PC-9 (cell line): ENCODE measurements at regions of chr2 and their contacts with region 1.

Region 1: GRCh38 chr2:69914170-69914960 is 544 bp upstream of the MXD1 start:
- DNase-seq: peak; percentile 99 to 100
- H3K4me3 ChIP-seq: peak overlapping the region; percentile 75
- H3K27ac ChIP-seq: peak overlapping the region; percentile 80
- H3K4me1 ChIP-seq: peaks cover 45% of the 10 kb centered on the region
- H3K27me3 ChIP-seq: no peaks in the 10 kb centered on the region
- CTCF ChIP-seq: peak; percentile 19; the same call in 1 of the 2 replicates

Region 2: DNA sequence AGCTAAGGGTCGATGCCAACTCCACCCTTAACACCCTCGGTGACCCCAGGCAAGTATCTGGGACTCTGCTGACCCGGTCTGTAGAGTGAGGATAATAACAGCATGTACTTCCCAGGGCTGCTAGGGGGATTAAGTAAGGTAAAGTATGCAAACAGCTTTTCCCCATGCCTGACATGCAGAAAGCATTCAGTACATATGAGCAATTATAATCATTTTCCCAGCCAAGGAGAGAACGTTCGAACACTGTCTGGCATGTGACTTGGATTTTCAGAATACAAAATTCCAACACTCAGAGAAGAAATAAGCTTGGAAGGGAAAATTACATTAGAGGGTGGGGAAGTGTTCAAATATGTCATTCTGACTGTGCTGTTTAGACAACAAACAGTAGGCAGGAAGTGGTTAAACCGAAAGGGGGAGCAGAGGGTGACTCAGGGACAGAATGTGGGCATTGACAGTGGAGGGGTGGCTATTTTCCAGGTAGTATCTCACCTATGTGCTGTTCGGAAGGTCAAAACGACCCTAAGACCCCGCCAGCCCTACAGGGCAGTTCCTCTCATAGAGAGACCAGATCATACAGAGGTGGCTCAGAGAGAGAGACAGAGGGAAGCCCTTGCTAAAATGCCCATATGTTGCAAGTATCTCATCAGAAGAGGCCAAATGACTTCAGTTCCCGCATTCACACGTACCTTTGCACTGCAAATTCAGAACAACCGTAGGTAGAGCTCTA is 32.1 kb after region 1 on chr2:
- CTCF ChIA-PET with region 1: no interaction called
- POLR2A ChIA-PET with region 1: interaction called, 4 read pairs
- intact Hi-C with region 1: loop called (anchors 2 kb)
- DNase-seq: peak; percentile 45 to 87
- H3K4me3 ChIP-seq: peak overlapping the region; percentile 16; the same call in 1 of the 2 replicates
- H3K27ac ChIP-seq: peak overlapping the region; percentile 98
- H3K4me1 ChIP-seq: peaks cover 70% of the 10 kb centered on the region
- H3K27me3 ChIP-seq: no peaks in the 10 kb centered on the region
- CTCF ChIP-seq: peak; percentile 22; the same call in 1 of the 2 replicates

Region 3: GRCh38 chr2:70009762-70010575 is 95.6 kb after region 1 on chr2:
- CTCF ChIA-PET with region 1: interaction called, 8 read pairs
- POLR2A ChIA-PET with region 1: interaction called, 17 read pairs
- intact Hi-C with region 1: no loop called
- DNase-seq: peak in 1 of 2 experiments; percentile 44
- H3K4me3 ChIP-seq: no peak overlapping the region
- H3K27ac ChIP-seq: no peak overlapping the region
- H3K4me1 ChIP-seq: 0 out of 2 replicates have a peak, but pooled peaks cover 11% of the 10 kb centered on the region
- H3K27me3 ChIP-seq: no peaks in the 10 kb centered on the region
- CTCF ChIP-seq: no peak

Region 4: GRCh38 chr2:70086838-70087701 is 172.7 kb after region 1 on chr2 and contains the start of gene PCBP1:
- CTCF ChIA-PET with region 1: no interaction called
- POLR2A ChIA-PET with region 1: interaction called, 11 read pairs
- intact Hi-C with region 1: loop called (anchors 1 kb)
- DNase-seq: peak; percentile 85 to 90
- H3K4me3 ChIP-seq: peak within 1 kb of the TSS; percentile 98
- H3K27ac ChIP-seq: peak within 1 kb of the TSS; percentile 100
- H3K4me1 ChIP-seq: peaks cover 43% of the 10 kb centered on the region
- H3K27me3 ChIP-seq: no peaks in the 10 kb centered on the region
- CTCF ChIP-seq: no peak
- total RNA-seq, gene PCBP1: 148 and 227 TPM in 2 replicates

Region 5: DNA sequence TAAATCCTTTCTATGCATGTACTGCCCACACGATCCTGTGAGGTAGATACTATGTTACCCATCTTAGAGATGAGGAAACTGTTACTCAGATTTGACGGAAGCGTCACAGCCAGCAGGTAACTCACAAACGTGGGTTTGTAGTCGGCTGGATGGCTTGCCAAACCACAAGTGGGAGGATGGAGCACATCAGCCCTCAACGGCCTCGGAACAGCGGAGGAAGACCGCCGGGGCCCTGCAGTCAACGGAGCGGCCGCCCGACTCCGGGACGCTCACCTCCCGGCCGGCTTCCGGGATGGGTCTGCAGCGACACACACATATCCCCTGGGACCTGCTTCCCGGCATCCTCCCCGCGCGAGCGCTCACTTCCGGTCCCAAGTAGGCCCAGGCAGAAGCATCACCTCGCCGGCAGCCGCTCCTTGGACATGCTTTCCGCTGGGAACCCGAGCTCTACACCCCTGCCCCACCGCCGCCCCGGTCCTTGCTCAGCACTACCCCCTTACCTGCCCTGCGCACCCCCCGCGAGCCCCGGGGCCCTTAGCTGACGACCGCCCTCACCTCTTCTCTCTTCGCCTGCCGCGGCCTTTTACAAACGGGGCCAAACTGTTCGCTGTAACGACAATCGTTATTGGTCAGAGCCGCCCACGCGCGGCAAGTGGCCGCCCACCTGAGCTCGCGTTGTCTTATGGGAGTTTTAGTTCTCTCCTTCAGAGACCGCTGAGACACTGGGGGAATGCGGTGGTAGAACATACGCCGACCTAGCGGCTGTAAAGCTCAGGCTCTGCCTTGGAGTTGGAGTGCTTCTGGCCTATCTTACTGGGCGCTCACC is 276.3 kb after region 1 on chr2 and contains the start of gene C2orf42:
- CTCF ChIA-PET with region 1: interaction called, 3 read pairs
- POLR2A ChIA-PET with region 1: interaction called, 6 read pairs
- intact Hi-C with region 1: loop called (anchors 1 kb)
- DNase-seq: peak; percentile 91 to 95
- H3K4me3 ChIP-seq: peak within 1 kb of the TSS; percentile 85
- H3K27ac ChIP-seq: peak within 1 kb of the TSS; percentile 78
- H3K4me1 ChIP-seq: peaks cover 16% of the 10 kb centered on the region
- H3K27me3 ChIP-seq: no peaks in the 10 kb centered on the region
- CTCF ChIP-seq: no peak
- total RNA-seq, gene C2orf42: 12.7 and 14.3 TPM in 2 replicates

Region 6: DNA sequence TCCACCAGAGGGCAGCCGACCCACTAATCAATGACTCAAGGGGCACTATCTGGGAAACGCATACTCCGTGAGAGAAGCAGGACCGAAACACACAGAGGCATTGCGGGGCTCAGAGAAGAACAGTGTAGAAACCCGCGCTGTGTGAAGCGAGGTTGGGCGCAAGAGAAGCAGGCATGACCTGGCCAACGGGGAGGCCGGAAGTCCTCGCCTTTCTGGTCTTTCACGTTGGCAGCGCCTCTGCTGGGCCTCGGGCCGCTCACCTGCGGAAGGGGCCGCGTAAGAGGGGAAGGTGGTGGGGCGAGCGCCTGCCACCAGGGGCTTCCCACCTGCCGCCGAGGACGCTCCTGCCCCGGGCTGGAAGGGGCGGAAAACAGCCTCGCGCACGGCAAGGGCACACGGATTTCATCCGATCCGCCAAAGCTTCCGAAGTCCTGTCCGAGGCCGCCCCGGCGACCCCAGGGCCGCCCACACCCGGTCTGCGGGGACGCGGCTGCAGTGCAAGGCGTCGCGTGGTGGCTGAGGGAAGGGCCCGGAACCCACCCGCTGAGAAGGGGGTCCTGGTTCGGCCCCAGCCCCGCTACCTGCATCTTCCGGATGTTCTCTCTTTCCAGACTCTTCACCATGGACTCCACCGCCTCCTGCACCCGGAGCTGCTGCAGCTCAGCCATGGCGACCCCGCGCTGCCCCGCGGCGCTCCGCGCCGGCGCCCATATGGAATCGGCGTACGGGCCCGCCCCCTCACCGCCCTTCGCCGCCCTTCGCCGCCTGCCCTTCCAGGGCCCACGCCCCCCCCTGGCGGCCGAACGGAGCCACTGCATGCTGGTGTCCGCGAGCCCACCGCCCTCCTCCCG is 387.2 kb after region 1 on chr2 and contains the start of gene FAM136A:
- CTCF ChIA-PET with region 1: interaction called, 3 read pairs
- POLR2A ChIA-PET with region 1: interaction called, 4 read pairs
- intact Hi-C with region 1: loop called (anchors 2 kb)
- DNase-seq: peak; percentile 58 to 89
- H3K4me3 ChIP-seq: peak within 1 kb of the TSS; percentile 81
- H3K27ac ChIP-seq: peak within 1 kb of the TSS; percentile 70
- H3K4me1 ChIP-seq: no peaks in the 10 kb centered on the region; the same call in 1 of the 2 replicates
- H3K27me3 ChIP-seq: no peaks in the 10 kb centered on the region
- CTCF ChIP-seq: peak; percentile 90
- total RNA-seq, gene FAM136A: 38.5 and 39.3 TPM in 2 replicates